Activated CD8-positive, alpha-beta memory T cell treated with anti-CD3 and anti-CD28 coated beads, Interleukin-2, amount 10 ng/mL, durations not matched to agents 7 days and 5 days (primary cell): ENCODE measurements at regions of chr1 and their contacts with region 1.

Region 1: GRCh38 chr1:156659994-156660751 is 17.0 kb downstream of the NES start:
- DNase-seq: peak; percentile 97
- ATAC-seq: peak; percentile 81
- H3K4me3 Mint-ChIP-seq: peak overlapping the region; percentile 82
- H3K27ac Mint-ChIP-seq: peak overlapping the region; percentile 95
- H3K4me1 Mint-ChIP-seq: peaks cover 68% of the 10 kb centered on the region
- H3K27me3 Mint-ChIP-seq: peaks cover 24% of the 10 kb centered on the region

Region 2: DNA sequence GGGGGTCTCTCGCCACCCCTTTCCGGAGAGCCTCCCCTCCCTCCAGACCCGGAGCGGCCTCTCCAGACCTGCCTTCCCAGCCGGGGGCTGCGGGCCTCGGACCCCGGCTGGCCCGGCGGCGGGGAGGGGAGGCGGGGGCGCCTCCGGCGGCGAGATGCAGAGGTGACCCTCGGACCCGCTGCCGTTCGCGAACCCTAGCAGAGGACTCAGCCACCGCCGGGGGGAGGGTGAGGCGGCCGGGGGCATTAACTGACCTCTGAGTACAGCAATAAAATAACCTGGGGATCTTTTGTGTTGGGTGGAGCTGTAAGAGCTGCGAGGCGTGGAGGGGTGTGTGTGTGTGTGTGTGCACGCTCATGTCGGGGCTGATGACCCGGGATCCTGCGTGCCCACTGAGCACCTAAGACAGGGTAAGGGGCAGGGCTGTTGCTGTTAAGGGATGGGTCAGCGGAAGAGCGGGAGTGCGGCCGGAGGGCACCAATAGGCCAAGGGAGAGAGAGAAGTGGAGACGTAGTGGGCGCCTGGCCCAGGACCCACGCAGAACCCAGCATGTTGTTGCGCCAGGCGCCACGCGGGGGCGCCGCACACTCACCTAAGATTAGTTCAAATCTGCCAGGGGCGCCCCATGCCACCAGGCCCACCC is 34.6 kb before region 1 on chr1:
- CTCF ChIA-PET with region 1: interaction called, 340 read pairs
- DNase-seq: peak; percentile 64
- ATAC-seq: peak; percentile 64
- H3K4me3 Mint-ChIP-seq: no peak overlapping the region
- H3K27ac Mint-ChIP-seq: no peak overlapping the region
- H3K4me1 Mint-ChIP-seq: peaks cover 8% of the 10 kb centered on the region
- H3K27me3 Mint-ChIP-seq: peaks cover 68% of the 10 kb centered on the region

Region 3: GRCh38 chr1:156641761-156642264 is 18.4 kb before region 1 on chr1 and contains the start of gene BCAN:
- CTCF ChIA-PET with region 1: interaction called, 45 read pairs
- DNase-seq: no peak
- ATAC-seq: no peak
- H3K4me3 Mint-ChIP-seq: no peak within 1 kb of the TSS
- H3K27ac Mint-ChIP-seq: no peak within 1 kb of the TSS
- H3K4me1 Mint-ChIP-seq: peaks cover 41% of the 10 kb centered on the region
- H3K27me3 Mint-ChIP-seq: peaks cover 90% of the 10 kb centered on the region
- total RNA-seq, gene BCAN: 0.07 TPM in 1 of 2 experiments, not detected in the other

Region 4: DNA sequence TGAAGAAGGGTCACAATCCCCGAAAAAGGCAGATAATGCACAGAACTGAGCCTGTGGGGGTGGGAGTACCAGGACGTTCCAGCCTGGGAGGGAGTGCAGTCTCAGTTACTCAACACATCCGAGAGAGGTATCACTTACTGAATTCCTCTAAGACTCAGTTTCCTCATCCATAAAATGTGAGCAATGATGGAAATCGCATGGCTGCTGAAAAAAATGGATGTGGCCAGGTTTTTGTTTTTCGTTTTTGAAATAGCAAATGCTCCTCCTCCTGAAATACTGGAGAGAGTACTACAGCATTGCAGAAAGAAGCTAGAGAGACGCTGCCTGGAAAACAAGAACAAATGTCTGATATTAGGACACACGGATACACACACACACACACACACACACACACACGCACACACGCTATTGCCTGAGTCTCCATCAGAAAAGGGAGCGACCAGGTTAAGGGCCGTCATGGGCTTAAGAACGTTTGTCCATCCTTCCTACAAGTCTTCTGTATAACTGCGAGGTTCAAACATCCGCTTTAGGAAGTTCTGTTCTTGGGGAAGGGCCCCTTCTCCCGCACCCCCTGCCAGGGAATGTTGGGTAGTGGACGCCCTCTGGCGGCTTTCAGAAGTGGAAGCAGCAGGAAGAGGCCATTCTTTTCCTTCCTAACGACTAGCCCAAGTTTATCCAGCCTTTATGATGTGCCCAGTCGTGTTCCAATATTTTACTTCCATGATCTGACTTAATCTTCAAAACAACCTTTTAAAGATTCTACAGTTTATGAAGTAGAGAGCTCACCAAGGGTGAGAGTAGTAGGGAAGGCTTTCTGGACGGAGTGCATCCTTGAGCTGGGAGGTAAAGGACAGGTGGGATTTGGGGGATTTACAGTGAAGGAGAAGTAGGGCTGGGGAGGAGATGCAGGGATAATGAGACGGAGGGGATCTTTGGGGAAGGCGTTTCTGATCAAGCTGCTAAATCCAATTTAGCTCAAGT is 17.7 kb after region 1 on chr1:
- CTCF ChIA-PET with region 1: interaction called, 185 read pairs
- DNase-seq: no peak
- ATAC-seq: peak; percentile 31
- H3K4me3 Mint-ChIP-seq: no peak overlapping the region
- H3K27ac Mint-ChIP-seq: no peak overlapping the region
- H3K4me1 Mint-ChIP-seq: peaks cover 7% of the 10 kb centered on the region
- H3K27me3 Mint-ChIP-seq: peaks cover 88% of the 10 kb centered on the region

Region 5: DNA sequence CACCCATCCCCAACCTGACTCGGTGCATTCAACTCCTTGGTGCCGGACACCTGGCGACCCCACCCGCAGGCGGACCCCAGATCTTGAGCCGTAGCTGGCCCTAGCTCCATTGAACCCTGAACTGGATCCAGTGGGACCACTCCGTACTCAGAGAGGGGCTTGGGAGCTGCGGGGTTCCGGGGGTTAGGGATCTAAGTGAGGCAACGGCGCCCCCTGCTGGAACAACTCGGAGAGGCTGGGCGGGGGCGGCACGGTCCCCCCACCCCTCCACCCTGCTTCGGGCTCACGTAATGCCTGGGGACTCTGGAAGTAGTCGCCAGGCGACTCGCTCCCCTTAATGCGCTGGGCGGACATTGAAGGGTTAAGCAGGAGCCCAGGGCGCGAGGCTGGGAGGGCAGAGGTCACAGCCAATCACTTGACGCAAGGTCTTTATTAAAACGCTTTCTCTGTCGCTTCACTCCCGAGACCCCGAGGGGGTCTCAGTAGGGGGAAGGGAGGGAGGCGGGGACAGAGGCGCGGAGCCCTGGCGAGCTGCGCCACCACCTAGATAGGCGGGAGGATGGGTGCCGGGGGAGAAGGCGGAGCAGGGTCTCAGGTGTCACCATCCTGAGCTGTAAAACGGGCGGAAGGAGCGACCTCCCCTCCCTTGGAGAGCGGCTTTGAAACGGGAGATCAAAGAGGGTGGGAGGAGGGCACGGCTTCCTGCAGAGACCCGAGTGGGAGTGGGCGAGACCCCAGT is 45.9 kb after region 1 on chr1:
- CTCF ChIA-PET with region 1: interaction called, 66 read pairs
- DNase-seq: peak; percentile 70
- ATAC-seq: peak; percentile 77
- H3K4me3 Mint-ChIP-seq: peak overlapping the region; percentile 56
- H3K27ac Mint-ChIP-seq: no peak overlapping the region
- H3K4me1 Mint-ChIP-seq: peaks cover 20% of the 10 kb centered on the region
- H3K27me3 Mint-ChIP-seq: peaks cover 43% of the 10 kb centered on the region

Region 6: GRCh38 chr1:156717275-156717805 is 57.2 kb after region 1 on chr1:
- CTCF ChIA-PET with region 1: interaction called, 10 read pairs
- DNase-seq: no peak
- ATAC-seq: no peak
- H3K4me3 Mint-ChIP-seq: no peak overlapping the region
- H3K27ac Mint-ChIP-seq: no peak overlapping the region
- H3K4me1 Mint-ChIP-seq: peaks cover 15% of the 10 kb centered on the region
- H3K27me3 Mint-ChIP-seq: no peaks in the 10 kb centered on the region